ENCODE measurements at regions of chr11 and their contacts with region 1.

Region 1: DNA sequence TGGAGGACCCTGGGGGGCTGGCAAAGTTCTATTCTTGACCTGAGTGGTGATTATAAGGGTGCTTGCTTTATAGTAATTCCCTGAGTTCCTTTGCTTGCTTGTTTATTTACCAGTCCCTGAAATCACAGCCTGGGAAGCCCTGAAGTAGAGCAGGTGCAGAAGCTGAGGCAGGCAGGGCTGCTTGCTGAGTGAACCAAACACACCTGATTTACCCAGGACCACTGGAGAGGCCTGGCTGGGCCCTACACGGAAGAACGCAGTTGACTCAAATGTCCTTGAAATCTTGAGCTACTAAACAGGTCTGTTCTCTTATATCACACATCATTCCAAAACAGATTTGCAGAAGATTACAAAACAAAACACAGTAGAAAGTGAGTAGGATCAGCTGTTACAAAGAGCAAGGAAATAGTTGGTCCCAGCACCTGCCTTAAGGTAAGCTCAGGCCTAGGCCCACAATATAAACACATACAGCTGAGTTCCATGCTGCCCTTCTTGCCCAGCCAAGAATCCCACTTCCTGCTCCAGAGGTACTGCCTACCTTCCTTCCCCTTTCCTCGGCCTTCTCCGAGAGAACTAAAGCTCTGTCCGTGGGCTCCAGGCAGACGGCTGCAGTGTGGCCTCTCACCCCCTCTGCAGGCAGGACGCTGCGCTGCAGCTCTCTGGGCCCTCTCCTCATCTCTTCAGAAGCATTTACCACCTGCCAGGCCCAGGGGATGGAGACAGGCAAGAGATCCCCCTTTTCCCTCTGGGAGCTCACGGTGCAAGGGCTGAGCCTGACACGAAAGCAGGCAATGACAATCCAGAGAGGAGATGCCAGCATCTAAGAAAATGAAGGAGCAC is 46.1 kb upstream of the SCUBE2 start:
- DNase-seq: peak; percentile 55 to 72 (median 67)
- H3K4me3 ChIP-seq: peak overlapping the region in 1 of 7 experiments; percentile 11
- H3K27ac ChIP-seq: no peak overlapping the region
- H3K4me1 ChIP-seq: peaks cover 0 to 27% (median 15%) of the 10 kb centered on the region in 4 experiments
- H3K27me3 ChIP-seq: no peaks in the 10 kb centered on the region

Region 2: DNA sequence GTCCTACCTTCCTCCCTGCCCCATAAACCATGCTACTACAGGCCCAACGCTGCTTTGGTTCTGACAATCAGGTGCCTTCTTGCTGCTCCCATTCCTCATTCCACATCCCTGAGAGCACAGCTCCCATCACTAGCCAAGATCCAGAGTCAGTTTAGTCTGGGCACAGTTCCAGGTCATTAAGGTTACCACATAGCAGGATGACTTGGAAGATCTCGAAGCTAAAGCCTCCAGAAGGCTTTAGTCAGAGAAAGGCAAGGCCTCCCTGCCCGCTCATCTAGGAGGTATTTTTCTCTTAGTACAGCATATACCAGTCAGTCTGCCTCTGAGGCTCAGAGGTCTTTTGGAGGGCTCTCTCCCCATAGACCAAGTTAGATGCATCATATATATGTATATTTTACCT is 485.4 kb before region 1 on chr11:
- CTCF ChIA-PET with region 1: no interaction called
- POLR2A ChIA-PET with region 1: no interaction called
- DNase-seq: no peak
- H3K4me3 ChIP-seq: no peak overlapping the region
- H3K27ac ChIP-seq: no peak overlapping the region
- H3K4me1 ChIP-seq: no peaks in the 10 kb centered on the region
- H3K27me3 ChIP-seq: no peaks in the 10 kb centered on the region

Region 3: GRCh38 chr11:8813658-8814057 is 323.9 kb before region 1 on chr11:
- CTCF ChIA-PET with region 1: no interaction called
- POLR2A ChIA-PET with region 1: no interaction called
- DNase-seq: peak; percentile 70 to 80 (median 76)
- H3K4me3 ChIP-seq: no peak overlapping the region
- H3K27ac ChIP-seq: no peak overlapping the region
- H3K4me1 ChIP-seq: peaks cover 0 to 28% (median 17%) of the 10 kb centered on the region in 4 experiments
- H3K27me3 ChIP-seq: no peaks in the 10 kb centered on the region

Region 4: GRCh38 chr11:8911029-8911826 is 226.3 kb before region 1 on chr11 and contains the start of gene AKIP1:
- CTCF ChIA-PET with region 1: interaction called, 40 read pairs
- POLR2A ChIA-PET with region 1: interaction called, 4 read pairs
- DNase-seq: peak; percentile 95 to 98 (median 96)
- H3K4me3 ChIP-seq: peak within 1 kb of the TSS; percentile 83 to 96 (median 93)
- H3K27ac ChIP-seq: peak within 1 kb of the TSS; percentile 33 to 85
- H3K4me1 ChIP-seq: peaks cover 15 to 33% (median 27%) of the 10 kb centered on the region in 4 experiments
- H3K27me3 ChIP-seq: peaks cover 0 to 4% (median 0%) of the 10 kb centered on the region in 5 experiments

Region 5: DNA sequence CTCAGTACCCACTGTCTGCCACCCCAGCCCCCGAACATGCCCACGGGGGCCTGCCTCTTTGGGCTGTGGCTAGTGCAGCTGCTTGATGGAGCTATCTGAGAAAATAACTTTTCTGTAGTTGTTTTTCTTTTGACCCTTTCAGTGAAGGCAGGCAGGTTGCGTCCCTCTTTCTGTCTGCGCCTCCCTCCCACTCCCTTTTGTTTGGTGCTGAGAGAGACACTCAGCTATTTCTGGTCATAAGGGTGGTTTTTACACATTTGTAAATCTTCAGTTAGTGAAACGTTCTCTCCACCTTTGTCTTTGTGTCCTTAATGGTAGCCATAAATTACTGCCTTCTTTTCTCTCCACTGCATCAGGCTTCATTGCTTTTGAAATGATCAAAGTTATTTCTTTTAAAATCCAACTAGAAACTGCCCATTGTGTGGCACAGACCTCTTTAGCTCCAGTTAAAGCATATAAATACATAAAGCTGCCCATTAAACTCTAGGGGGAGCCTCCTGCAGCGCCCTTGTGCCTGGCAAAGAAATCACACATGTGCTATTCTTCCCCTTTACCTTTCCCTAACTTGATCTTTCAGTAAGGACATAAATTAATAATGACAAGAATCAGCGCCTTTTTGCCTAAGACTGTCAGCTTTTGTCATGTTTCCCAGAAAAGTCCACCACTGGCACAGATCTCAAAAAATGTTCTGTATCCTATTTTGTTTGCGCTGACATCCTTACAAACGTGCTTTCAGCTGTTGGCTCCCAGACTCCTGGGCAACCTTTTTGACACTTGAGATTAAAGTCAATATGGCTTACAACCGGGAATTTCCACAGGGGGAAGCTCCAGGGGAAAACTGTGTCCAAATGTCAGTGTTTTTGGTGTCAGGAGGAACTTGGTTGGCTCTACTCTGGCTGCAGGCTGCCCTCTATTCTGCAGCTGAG is 44.4 kb before region 1 on chr11:
- CTCF ChIA-PET with region 1: interaction called, 50 read pairs
- POLR2A ChIA-PET with region 1: no interaction called
- DNase-seq: peak; percentile 23 to 39 (median 37)
- H3K4me3 ChIP-seq: no peak overlapping the region
- H3K27ac ChIP-seq: no peak overlapping the region
- H3K4me1 ChIP-seq: peaks cover 0 to 13% (median 11%) of the 10 kb centered on the region in 4 experiments
- H3K27me3 ChIP-seq: peaks cover 0 to 48% (median 21%) of the 10 kb centered on the region in 5 experiments

Region 6: DNA sequence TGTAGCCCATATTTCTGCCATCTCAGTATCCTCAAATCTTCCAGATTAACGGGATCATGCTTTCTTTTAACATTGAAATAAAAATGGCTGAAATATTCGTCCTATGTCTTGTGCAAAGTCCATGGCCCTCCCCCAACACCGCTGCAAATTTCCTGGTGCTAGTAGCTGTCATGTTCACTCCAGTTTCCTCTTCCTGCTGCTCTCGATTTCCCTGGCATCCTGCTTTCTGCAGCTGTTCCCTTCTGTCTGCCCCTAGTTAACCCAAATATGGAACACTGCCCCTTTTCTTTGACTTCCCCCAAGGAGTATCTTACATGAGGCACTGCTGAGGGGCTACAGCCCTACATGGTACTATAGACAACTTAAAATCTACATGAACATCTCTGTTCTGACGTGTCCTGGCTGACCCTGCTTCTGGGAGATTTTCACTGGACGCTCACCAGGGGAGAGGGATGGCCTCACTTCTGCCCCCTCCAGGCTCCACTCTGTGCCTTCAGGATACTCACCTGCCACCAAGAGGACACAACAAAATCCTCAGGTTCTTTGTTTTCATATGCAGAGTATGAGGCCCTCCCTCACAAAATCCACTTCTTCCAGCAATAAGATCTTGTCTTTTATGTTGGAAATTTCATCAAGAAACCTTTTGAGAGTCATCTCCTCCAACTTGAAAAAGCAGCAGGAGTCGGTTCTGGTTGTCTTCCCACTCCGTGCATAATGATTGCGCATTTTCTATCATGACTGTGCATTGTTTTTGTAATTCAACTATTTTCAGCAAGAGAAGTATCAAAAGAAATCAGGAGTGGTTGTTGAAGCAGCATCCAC is 16.6 kb before region 1 on chr11:
- CTCF ChIA-PET with region 1: interaction called, 14 read pairs
- POLR2A ChIA-PET with region 1: interaction called, 4 read pairs
- DNase-seq: no peak
- H3K4me3 ChIP-seq: no peak overlapping the region
- H3K27ac ChIP-seq: no peak overlapping the region
- H3K4me1 ChIP-seq: no peaks in the 10 kb centered on the region
- H3K27me3 ChIP-seq: no peaks in the 10 kb centered on the region

Region 7: DNA sequence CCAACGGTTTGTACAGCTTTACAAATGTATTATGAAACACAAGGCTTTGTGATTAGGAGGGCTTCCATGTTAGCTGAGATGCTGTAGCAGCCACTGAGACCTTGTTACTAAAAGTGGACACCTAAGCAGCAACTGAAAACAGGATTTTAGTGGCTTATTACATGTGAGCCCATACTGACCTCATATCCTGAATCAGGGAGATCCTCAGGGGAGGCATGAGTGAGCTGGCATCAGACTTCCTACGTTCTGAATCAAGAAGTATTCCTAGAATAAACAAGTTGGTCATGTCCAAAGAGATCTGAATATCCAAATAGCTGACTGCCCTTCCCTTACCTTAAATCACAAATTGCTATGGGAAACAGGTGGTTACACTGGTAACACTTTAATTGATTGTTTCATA is 13.0 kb after region 1 on chr11:
- CTCF ChIA-PET with region 1: interaction called, 27 read pairs
- POLR2A ChIA-PET with region 1: no interaction called
- DNase-seq: no peak
- H3K4me3 ChIP-seq: no peak overlapping the region
- H3K27ac ChIP-seq: no peak overlapping the region
- H3K4me1 ChIP-seq: no peaks in the 10 kb centered on the region
- H3K27me3 ChIP-seq: no peaks in the 10 kb centered on the region

Region 8: DNA sequence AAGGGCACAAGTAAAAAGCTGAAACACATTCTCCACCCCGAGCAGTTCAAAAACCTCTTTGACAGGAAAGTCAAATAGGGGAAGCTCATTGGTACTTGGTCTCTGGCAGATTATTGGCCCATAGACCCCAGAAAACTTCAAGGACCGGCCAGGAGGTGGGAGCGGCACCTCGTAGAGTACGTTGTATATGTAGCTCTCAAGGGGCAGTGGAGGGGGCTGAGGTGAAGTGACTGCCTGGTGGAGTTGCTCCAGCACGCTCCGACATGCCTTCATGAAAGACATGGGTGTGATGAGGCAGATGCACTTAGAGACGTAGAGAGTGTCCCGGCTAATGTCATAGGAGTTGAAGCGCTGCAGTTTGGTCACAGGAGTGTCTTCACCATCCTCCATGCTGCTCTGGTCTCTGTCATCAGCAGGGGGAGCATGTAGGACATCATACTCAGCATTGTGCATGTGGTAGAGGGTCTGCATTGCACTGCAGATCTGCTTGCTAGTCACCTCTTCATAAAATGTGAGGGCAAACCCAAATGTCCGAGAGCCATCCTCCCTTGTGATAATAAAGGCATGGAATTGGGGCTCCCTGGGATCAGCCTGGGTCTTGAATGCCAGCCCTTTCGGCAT is 66.3 kb after region 1 on chr11:
- CTCF ChIA-PET with region 1: no interaction called
- POLR2A ChIA-PET with region 1: no interaction called
- DNase-seq: peak; percentile 45 to 70 (median 64)
- H3K4me3 ChIP-seq: no peak overlapping the region
- H3K27ac ChIP-seq: no peak overlapping the region
- H3K4me1 ChIP-seq: peaks cover 0 to 3% (median under 1%) of the 10 kb centered on the region in 4 experiments
- H3K27me3 ChIP-seq: no peaks in the 10 kb centered on the region